ENCODE measurements at regions of chr3 and their contacts with region 1.

Region 1: GRCh38 chr3:39548282-39548681 is 80.8 kb downstream of the MOBP start:
- DNase-seq: no peak
- ATAC-seq: no peak

Region 2: GRCh38 chr3:39707314-39707909 is 159.1 kb after region 1 on chr3:
- intact Hi-C with region 1: loop called in 1 of 2 experiments (anchors 5 kb)
- DNase-seq: no peak
- ATAC-seq: no peak

Region 3: DNA sequence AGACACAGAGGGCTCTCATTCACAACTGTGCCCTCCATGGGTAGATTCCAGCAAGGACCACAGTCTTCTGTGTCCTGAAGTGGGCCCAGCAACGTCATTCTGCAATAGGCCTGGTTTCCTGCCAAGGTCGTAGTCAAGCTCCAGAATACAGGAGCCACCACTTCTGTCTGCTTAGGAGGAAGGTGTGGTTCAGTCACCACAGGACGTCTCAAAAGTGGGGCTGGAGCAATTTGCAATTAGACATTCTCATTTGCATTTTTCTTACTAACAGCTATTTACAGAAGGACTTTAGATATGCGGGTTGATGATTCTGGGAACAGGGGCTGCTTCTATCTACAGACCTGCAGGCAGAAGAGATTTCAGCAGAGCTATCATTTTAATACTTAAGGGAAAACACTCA is 202.4 kb after region 1 on chr3:
- intact Hi-C with region 1: no loop called
- DNase-seq: no peak
- ATAC-seq: no peak